ENCODE measurements at regions of chr10 and their contacts with region 1.

Region 1: DNA sequence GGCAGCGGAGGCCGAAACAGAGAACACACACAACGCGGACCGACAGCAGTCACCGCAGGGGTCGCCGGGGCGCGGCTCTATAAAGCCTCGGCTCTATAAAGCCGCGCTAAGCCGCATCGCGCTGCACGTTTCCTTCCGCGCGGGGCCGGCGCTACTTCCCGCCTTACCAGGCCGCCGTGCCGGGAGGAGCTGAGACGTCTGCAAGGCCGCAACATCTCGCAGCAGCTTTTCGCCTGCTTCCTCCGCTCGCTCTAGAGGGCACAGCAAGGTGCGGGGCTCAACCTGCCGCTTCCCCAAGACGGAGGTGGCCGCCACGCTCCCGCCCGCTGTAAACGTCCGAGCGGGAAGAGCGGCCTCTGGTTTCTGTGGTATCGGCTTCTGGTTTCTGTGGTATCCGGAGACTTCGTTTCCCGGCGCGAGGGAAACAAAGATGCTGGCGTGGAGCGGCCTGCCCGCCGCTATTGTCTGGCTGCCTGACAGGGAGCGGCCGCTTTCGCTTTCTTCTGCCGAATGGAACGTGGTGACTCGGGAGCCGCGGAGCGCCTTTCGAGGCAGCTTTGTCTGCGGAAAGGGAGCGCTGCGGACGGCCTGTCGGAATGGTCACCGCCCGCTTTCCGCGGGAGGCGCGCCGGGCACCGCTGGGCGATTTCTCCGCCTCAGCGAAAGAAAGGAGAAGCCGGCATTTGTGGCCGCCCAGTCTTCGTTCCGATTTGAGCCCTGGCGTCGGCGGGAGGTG is 91.8 kb downstream of the SPAG6 start:
- DNase-seq: peak; percentile 92
- ATAC-seq: peak; percentile 83
- H3K4me3 Mint-ChIP-seq: peak overlapping the region; percentile 90
- H3K27ac Mint-ChIP-seq: peak overlapping the region; percentile 95
- H3K4me1 Mint-ChIP-seq: peaks cover 53% of the 10 kb centered on the region
- H3K27me3 Mint-ChIP-seq: no peaks in the 10 kb centered on the region

Region 2: DNA sequence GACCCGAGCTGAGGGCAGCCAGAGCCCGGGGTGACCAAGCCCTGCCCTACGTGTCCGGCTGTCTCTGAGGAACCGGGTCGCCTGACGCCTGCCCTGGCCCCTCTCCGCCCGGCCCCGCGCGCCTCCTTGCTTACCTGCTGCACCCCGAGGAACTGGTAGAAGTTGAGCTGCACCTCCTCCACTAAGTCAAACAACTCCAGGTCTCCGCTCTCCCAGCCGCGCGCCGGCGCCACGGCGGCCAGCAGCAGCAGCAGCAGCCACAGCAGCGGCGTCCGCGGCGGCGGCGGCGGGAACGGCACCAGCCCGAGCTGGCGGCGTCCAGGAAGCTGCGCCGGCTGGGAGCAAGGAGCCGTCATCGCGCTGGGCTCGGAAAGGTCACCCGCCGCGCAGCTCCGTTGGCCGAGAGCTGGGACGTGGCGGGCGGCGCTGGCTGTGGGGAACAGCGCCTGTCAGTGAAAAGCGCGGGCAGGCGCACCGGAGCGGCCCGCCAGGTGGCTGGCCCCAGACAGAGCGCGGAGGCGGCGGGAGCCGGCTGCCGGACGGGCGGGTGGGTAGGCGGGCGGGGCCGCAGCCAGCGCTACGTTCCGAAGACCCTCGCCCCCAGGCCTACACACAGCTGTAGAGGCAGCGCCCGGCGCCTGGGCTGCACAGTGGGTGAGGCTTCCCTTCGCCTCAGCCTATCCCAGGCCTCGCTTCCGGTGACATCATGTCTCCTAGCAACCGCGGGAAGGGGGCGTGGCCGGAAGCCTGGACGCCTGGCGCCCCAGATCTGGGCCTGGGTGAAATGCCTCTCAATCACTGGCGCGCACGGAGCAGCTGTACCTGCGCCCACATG is 433.8 kb before region 1 on chr10 and contains the start of gene DNAJC1:
- CTCF ChIA-PET with region 1: no interaction called
- POLR2A ChIA-PET with region 1: no interaction called
- intact Hi-C with region 1: loop called (anchors 1 to 5 kb)
- DNase-seq: peak; percentile 99
- ATAC-seq: peak; percentile 93
- H3K4me3 Mint-ChIP-seq: peak within 1 kb of the TSS; percentile 94
- H3K27ac Mint-ChIP-seq: peak within 1 kb of the TSS; percentile 95
- H3K4me1 Mint-ChIP-seq: peaks cover 29% of the 10 kb centered on the region
- H3K27me3 Mint-ChIP-seq: no peaks in the 10 kb centered on the region
- total RNA-seq, gene DNAJC1: 20.6 to 28.1 TPM

Region 3: GRCh38 chr10:22251751-22252223 is 185.3 kb before region 1 on chr10:
- CTCF ChIA-PET with region 1: interaction called, 4 read pairs
- POLR2A ChIA-PET with region 1: no interaction called
- intact Hi-C with region 1: loop called (anchors 1 to 2 kb)
- DNase-seq: peak; percentile 83
- ATAC-seq: peak; percentile 42
- H3K4me3 Mint-ChIP-seq: peak overlapping the region; percentile 93
- H3K27ac Mint-ChIP-seq: peak overlapping the region; percentile 100
- H3K4me1 Mint-ChIP-seq: peaks cover 35% of the 10 kb centered on the region
- H3K27me3 Mint-ChIP-seq: peaks cover 5% of the 10 kb centered on the region

Region 4: GRCh38 chr10:22369434-22370072 is 67.5 kb before region 1 on chr10:
- CTCF ChIA-PET with region 1: no interaction called
- POLR2A ChIA-PET with region 1: interaction called, 3 read pairs
- intact Hi-C with region 1: loop called in 1 of 2 experiments (anchors 5 kb)
- DNase-seq: no peak
- ATAC-seq: peak; percentile 69
- H3K4me3 Mint-ChIP-seq: no peak overlapping the region
- H3K27ac Mint-ChIP-seq: no peak overlapping the region
- H3K4me1 Mint-ChIP-seq: peaks cover 37% of the 10 kb centered on the region
- H3K27me3 Mint-ChIP-seq: peaks cover 2% of the 10 kb centered on the region

Region 5: GRCh38 chr10:22682237-22683139 is 245.4 kb after region 1 on chr10:
- CTCF ChIA-PET with region 1: no interaction called
- POLR2A ChIA-PET with region 1: no interaction called
- intact Hi-C with region 1: loop called in 1 of 2 experiments (anchors 10 kb)
- DNase-seq: peak; percentile 78
- ATAC-seq: peak; percentile 50
- H3K4me3 Mint-ChIP-seq: peak overlapping the region; percentile 70
- H3K27ac Mint-ChIP-seq: peak overlapping the region; percentile 97
- H3K4me1 Mint-ChIP-seq: peaks cover 88% of the 10 kb centered on the region
- H3K27me3 Mint-ChIP-seq: no peaks in the 10 kb centered on the region

Region 6: GRCh38 chr10:22911889-22912762 is 475.1 kb after region 1 on chr10:
- CTCF ChIA-PET with region 1: no interaction called
- POLR2A ChIA-PET with region 1: interaction called, 10 read pairs
- intact Hi-C with region 1: no loop called
- DNase-seq: no peak
- ATAC-seq: no peak
- H3K4me3 Mint-ChIP-seq: no peak overlapping the region
- H3K27ac Mint-ChIP-seq: no peak overlapping the region
- H3K4me1 Mint-ChIP-seq: peaks cover 6% of the 10 kb centered on the region
- H3K27me3 Mint-ChIP-seq: no peaks in the 10 kb centered on the region

Measured in activated CD4-positive, alpha-beta T cell treated with anti-CD3 and anti-CD28 coated beads for 36 hours (primary cell).